ENCODE measurements at regions of chr1 and their contacts with region 1.

Region 1: GRCh38 chr1:44217809-44218410 is 4.6 kb downstream of the DMAP1 start:
- DNase-seq: peak; percentile 87
- H3K4me3 Mint-ChIP-seq: no peak overlapping the region
- H3K27ac Mint-ChIP-seq: peak overlapping the region; percentile 26
- H3K4me1 Mint-ChIP-seq: peaks cover 25% of the 10 kb centered on the region
- H3K27me3 Mint-ChIP-seq: no peaks in the 10 kb centered on the region

Region 2: GRCh38 chr1:44108241-44108640 is 109.7 kb before region 1 on chr1:
- CTCF ChIA-PET with region 1: no interaction called
- DNase-seq: no peak
- H3K4me3 Mint-ChIP-seq: no peak overlapping the region
- H3K27ac Mint-ChIP-seq: no peak overlapping the region
- H3K4me1 Mint-ChIP-seq: no peaks in the 10 kb centered on the region
- H3K27me3 Mint-ChIP-seq: peaks cover 31% of the 10 kb centered on the region

Region 3: DNA sequence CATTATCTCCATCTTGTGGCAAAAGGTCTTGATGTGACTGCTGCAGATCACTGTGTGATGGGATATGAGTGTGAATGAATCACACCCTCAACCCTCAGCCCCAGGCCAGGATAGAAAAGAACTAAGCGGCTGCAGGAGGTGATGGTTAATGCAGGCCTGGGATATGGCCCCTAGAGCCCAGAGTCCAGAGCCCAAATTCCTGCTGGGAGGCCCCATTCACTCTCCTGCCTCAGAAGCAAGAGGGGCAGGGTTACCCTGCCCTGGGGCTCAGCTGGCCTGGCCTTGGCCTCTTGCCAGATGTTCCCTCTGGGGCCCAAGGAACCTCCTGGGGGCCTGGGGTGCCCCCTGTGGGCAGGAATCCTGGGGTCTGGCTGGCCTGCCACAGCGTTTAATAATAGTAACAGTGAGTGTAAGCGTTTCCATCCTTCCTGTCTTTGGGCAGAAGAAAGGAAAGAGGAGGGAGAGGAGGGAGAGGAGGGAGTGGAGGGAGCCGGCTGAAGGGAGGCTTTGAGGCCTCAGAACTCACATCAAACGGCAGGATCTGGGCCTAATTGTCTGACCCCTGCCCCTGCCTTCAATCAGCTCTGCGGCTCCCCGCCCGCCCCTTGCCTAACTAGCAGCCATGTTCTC is 21.5 kb after region 1 on chr1:
- CTCF ChIA-PET with region 1: interaction called, 10 read pairs
- DNase-seq: no peak
- H3K4me3 Mint-ChIP-seq: no peak overlapping the region
- H3K27ac Mint-ChIP-seq: no peak overlapping the region
- H3K4me1 Mint-ChIP-seq: peaks cover 7% of the 10 kb centered on the region
- H3K27me3 Mint-ChIP-seq: no peaks in the 10 kb centered on the region

Region 4: GRCh38 chr1:44305962-44306422 is 88.1 kb after region 1 on chr1:
- CTCF ChIA-PET with region 1: interaction called, 18 read pairs
- DNase-seq: peak; percentile 75
- H3K4me3 Mint-ChIP-seq: peak overlapping the region; percentile 6
- H3K27ac Mint-ChIP-seq: peak overlapping the region; percentile 91
- H3K4me1 Mint-ChIP-seq: peaks cover 50% of the 10 kb centered on the region
- H3K27me3 Mint-ChIP-seq: no peaks in the 10 kb centered on the region

Region 5: GRCh38 chr1:44318097-44319088 is 100.5 kb after region 1 on chr1:
- CTCF ChIA-PET with region 1: interaction called, 25 read pairs
- DNase-seq: peak; percentile 61
- H3K4me3 Mint-ChIP-seq: no peak overlapping the region
- H3K27ac Mint-ChIP-seq: no peak overlapping the region
- H3K4me1 Mint-ChIP-seq: peaks cover 12% of the 10 kb centered on the region
- H3K27me3 Mint-ChIP-seq: no peaks in the 10 kb centered on the region

Region 6: DNA sequence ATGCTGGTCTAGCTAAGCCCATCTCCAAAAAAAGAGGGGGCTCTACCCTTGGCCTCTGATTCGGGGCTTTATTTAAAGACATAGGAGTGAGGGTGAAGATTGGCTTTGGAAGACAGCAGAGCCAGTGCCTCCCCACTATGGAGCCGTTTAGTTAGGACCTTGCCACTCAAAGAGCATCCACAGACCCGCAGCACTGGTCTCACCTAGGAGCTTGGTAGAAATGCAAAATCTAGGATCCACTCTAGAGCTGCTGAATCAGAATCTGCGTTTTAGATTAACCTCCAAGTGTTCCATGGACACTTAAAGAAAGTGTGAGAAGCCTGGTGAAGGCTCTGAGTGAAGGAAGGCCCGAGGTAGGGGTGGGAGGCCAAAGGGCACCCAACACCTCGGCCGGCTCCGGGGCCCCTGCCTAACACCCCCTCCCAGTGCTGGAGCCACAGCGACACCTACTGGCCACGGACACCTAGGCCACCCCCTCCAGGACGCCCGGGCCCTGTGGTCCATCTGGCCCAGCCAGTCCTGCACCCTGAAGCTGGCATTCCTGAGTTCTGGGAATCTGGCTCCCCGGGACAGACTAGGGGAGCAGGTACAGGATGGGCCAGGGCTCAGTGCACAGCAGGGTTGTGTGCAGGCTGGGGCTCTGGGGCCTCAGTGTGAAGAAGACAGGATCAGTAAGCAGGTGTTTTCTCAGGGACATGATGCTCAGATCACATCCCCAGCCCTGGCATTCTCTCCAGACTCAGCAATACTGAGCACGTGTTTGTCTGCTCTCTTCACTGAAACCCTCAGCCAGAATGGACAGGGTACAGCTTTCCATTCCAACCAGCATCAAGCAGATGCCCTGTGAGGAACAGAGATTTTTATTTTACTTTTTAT is 377.2 kb after region 1 on chr1:
- CTCF ChIA-PET with region 1: interaction called, 25 read pairs
- DNase-seq: peak; percentile 84
- H3K4me3 Mint-ChIP-seq: no peak overlapping the region
- H3K27ac Mint-ChIP-seq: no peak overlapping the region
- H3K4me1 Mint-ChIP-seq: no peaks in the 10 kb centered on the region
- H3K27me3 Mint-ChIP-seq: peaks cover 16% of the 10 kb centered on the region